ENCODE measurements at regions of chr5 and their contacts with region 1.

Region 1: GRCh38 chr5:40404613-40405012 is 275.1 kb upstream of the PTGER4 start:
- DNase-seq: no peak
- H3K4me3 Mint-ChIP-seq: peak overlapping the region; percentile 12
- H3K27ac Mint-ChIP-seq: peak overlapping the region; percentile 95
- H3K4me1 Mint-ChIP-seq: peaks cover 76% of the 10 kb centered on the region
- H3K27me3 Mint-ChIP-seq: no peaks in the 10 kb centered on the region

Region 2: DNA sequence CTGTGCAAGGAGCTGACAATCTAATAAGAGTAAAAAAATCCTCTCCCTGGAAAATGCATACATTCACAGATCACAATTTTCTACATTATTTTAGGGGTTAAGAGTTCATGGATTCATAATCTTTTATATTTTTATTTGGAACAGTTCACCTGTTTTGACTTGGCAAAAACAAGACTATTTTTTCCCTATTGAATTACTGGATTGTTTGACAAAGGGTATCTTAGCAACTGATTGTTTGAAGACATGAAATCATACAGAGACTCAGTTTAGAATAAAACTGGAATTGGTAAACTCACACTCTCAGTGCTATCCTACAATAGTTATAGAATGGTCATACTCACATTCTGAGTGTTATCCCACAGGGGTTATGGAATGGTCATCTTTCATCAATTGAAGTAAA is 83.1 kb before region 1 on chr5:
- CTCF ChIA-PET with region 1: no interaction called
- POLR2A ChIA-PET with region 1: no interaction called
- DNase-seq: no peak
- H3K4me3 Mint-ChIP-seq: no peak overlapping the region
- H3K27ac Mint-ChIP-seq: no peak overlapping the region
- H3K4me1 Mint-ChIP-seq: peaks cover 7% of the 10 kb centered on the region
- H3K27me3 Mint-ChIP-seq: no peaks in the 10 kb centered on the region

Region 3: DNA sequence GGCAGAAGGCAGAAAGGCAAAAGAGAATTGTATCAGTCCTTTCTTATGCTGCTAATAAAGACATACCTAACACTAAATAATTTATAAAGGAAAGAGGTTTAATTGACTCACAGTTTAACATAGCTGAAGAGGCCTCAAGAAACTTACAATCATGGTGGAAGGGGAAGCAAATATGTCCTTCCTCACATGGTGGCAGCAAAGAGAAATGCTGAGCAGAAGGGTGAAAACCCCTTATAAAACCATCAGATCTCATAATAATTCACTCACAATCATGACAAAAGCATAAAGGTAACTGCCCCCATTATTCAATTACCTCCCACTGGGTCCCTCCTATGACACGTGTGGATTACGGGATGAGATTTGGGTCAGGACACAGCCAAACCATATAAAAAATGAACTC is 37.4 kb before region 1 on chr5:
- CTCF ChIA-PET with region 1: no interaction called
- POLR2A ChIA-PET with region 1: no interaction called
- DNase-seq: no peak
- H3K4me3 Mint-ChIP-seq: no peak overlapping the region
- H3K27ac Mint-ChIP-seq: no peak overlapping the region
- H3K4me1 Mint-ChIP-seq: no peaks in the 10 kb centered on the region
- H3K27me3 Mint-ChIP-seq: no peaks in the 10 kb centered on the region

Region 4: DNA sequence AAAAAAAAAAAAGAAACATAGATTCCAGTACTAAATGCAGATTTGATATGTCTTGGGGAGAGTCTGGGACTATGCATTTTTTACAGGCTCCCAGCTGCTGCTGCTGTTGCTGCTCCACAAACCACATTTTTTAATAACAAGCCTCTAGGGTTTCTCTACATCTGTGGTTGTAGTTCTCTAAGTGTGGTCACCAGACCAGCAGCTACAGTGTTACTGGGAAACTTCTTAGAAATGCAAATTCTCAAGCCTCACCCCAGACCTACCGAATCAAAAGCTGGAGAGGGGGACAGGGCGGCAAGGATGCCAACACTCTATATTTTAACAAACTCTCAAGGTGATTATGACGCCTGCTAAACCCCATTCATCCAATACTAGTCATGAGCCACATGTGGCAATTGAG is 18.3 kb before region 1 on chr5:
- CTCF ChIA-PET with region 1: interaction called, 4 read pairs
- POLR2A ChIA-PET with region 1: interaction called, 41 read pairs
- DNase-seq: peak; percentile 52
- H3K4me3 Mint-ChIP-seq: no peak overlapping the region
- H3K27ac Mint-ChIP-seq: peak overlapping the region; percentile 53
- H3K4me1 Mint-ChIP-seq: peaks cover 87% of the 10 kb centered on the region
- H3K27me3 Mint-ChIP-seq: no peaks in the 10 kb centered on the region

Region 5: DNA sequence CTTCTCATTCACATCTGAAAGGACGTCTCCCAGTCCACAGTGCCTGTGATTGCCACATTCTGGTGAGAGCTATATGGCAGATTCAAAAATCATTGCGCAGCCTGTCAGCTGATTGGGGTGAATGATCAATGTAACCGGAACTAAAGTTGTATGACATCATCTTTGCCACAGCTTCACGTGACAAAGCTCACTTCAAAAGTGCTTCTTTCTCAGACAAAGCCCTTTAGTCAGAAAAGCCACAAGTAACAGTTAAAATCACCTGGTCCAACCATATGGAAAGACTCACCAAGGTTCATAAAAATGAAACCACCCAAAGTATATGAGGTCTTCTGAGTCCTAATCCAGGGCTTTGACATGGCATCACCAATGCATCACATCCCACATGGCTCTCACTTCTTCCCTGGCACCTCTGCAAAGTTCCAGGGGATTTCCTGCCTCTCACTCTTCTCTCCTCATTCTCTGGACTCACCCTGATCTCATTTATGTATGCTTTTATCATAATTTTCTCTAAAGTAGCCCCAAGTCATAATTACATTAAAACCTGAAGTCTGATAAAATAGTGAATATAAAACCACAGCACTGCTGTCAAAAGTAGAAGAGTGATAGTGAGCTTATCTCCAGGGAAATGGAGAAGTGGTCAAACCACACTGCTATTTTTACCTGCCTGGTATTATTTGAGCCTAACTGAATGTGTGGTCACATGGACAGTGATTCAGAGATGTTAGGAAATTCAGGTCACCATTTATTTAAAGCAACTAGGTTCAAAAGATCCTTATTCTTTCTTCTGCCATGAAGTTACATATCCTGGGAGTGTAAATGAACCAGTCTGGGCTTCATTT is 82.0 kb after region 1 on chr5:
- CTCF ChIA-PET with region 1: no interaction called
- POLR2A ChIA-PET with region 1: interaction called, 23 read pairs
- DNase-seq: peak; percentile 71
- H3K4me3 Mint-ChIP-seq: peak overlapping the region; percentile 14
- H3K27ac Mint-ChIP-seq: peak overlapping the region; percentile 88
- H3K4me1 Mint-ChIP-seq: peaks cover 80% of the 10 kb centered on the region
- H3K27me3 Mint-ChIP-seq: no peaks in the 10 kb centered on the region

Region 6: GRCh38 chr5:40518511-40518967 is 113.9 kb after region 1 on chr5:
- CTCF ChIA-PET with region 1: no interaction called
- POLR2A ChIA-PET with region 1: no interaction called
- DNase-seq: no peak
- H3K4me3 Mint-ChIP-seq: no peak overlapping the region
- H3K27ac Mint-ChIP-seq: no peak overlapping the region
- H3K4me1 Mint-ChIP-seq: peaks cover 36% of the 10 kb centered on the region
- H3K27me3 Mint-ChIP-seq: no peaks in the 10 kb centered on the region